Activated T-helper 1 cell treated with anti-CD3 and anti-CD28 coated beads, Interleukin-12 subunit alpha, Interleukin-12 subunit beta, Interleukin-2, Interleukin-4 antibody, amounts not matched to agents 30 ng/mL and 10 ng/mL and 1 ng/mL, durations not matched to agents 14 hours and 24 hours and 36 hours (primary cell): ENCODE measurements at regions of chr16 and their contacts with region 1.

Region 1: DNA sequence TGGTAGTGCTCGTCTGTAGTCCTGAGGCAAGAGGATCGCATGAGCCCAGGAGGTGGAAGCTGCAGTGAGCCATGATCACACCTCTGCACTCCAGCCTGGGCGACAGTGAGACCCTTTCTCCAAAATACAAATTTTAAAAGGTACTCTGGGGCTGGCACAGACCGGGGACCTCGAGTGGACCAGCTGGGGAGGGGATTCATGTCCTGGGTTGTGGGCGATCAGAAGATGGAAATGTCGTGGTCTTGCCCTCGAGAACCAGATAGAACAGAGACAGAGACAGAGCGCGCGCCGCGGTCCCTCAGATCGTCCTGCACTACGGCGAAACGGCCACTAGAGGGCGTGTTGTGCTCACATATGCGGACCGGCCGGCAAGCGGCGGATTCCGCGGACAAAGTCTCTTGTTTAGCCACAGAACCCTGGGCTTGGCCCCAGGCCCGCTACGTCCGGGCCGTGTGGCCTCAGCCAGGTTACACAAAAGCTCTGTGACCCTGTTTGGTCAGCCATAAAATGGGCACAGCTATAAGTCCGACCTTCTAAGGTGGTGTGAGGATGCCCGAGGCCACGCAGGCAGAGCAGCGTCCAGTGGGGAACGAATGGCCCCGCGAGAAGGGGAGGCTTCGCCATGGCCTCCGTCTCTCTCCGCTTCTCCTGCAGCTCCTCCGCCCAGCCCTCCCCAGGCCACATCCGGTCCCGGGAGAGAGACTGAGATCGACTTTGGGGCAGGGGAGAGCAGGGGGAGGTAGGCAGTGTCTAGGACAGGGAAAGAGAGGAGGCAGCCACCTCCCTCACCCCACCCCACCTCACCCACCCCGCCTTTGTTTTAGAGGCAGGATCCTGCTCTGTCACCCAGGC is 14.6 kb upstream of the SBK1 start:
- DNase-seq: peak; percentile 76
- H3K4me3 Mint-ChIP-seq: peak overlapping the region; percentile 72
- H3K27ac Mint-ChIP-seq: no peak overlapping the region
- H3K4me1 Mint-ChIP-seq: peaks cover 34% of the 10 kb centered on the region
- H3K27me3 Mint-ChIP-seq: peaks cover 19% of the 10 kb centered on the region

Region 2: DNA sequence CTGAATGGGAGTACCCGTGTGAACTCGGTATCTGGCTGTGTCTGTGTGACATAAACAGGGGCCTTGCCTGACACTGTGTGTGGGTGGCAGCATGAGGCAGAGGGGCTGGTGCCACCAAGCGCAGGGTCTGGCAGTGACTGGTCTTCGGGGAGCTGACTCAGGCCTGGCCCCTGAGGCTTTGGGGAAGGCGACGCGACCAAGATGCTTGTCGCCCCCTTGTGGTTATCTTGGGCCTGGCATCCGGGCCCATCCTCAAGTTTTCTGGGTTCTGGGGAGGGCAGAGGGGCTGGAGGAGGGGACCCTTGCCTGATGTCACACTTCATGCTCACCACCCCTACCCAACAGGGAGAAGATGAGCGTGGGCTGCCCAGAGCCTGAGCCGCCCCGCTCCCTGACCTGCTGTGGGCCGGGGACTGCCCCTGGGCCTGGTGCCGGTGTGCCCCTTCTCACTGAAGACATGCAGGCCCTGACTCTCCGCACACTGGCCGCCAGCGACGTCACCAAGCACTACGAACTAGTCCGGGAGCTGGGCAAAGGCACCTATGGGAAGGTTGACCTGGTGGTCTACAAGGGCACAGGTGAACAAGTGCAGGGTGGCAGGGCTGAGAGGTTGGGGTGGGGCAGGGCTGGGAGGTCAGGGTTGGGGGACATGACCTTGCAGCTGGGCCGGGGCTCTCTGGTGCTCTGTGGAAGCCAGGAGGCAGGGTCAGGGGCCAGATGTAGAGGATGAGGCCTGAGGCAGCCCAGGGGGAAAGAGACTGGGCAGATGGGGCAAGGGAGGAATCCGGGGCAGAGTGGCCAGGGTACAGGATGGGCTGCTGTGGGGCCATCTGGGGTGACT is 39.5 kb after region 1 on chr16:
- intact Hi-C with region 1: loop called (anchors 1 kb)
- DNase-seq: peak; percentile 50
- H3K4me3 Mint-ChIP-seq: no peak overlapping the region
- H3K27ac Mint-ChIP-seq: peak overlapping the region; percentile 18
- H3K4me1 Mint-ChIP-seq: peaks cover 6% of the 10 kb centered on the region
- H3K27me3 Mint-ChIP-seq: no peaks in the 10 kb centered on the region